Activated T-helper 1 cell treated with anti-CD3 and anti-CD28 coated beads, Interleukin-12 subunit alpha, Interleukin-12 subunit beta, Interleukin-2, Interleukin-4 antibody, amounts not matched to agents 30 ng/mL and 10 ng/mL and 1 ng/mL, durations not matched to agents 14 hours and 24 hours and 36 hours (primary cell): ENCODE measurements at regions of chr6 and their contacts with region 1.

Region 1: GRCh38 chr6:36615018-36615761 is 21.0 kb downstream of the SRSF3 start:
- DNase-seq: peak; percentile 37
- H3K4me3 Mint-ChIP-seq: no peak overlapping the region
- H3K27ac Mint-ChIP-seq: no peak overlapping the region
- H3K4me1 Mint-ChIP-seq: peaks cover 12% of the 10 kb centered on the region
- H3K27me3 Mint-ChIP-seq: no peaks in the 10 kb centered on the region

Region 2: GRCh38 chr6:36599791-36600209 is 15.4 kb before region 1 on chr6:
- intact Hi-C with region 1: loop called (anchors 2 kb)
- DNase-seq: peak; percentile 40
- H3K4me3 Mint-ChIP-seq: peak overlapping the region; percentile 97
- H3K27ac Mint-ChIP-seq: peak overlapping the region; percentile 81
- H3K4me1 Mint-ChIP-seq: peaks cover 80% of the 10 kb centered on the region
- H3K27me3 Mint-ChIP-seq: no peaks in the 10 kb centered on the region

Region 3: DNA sequence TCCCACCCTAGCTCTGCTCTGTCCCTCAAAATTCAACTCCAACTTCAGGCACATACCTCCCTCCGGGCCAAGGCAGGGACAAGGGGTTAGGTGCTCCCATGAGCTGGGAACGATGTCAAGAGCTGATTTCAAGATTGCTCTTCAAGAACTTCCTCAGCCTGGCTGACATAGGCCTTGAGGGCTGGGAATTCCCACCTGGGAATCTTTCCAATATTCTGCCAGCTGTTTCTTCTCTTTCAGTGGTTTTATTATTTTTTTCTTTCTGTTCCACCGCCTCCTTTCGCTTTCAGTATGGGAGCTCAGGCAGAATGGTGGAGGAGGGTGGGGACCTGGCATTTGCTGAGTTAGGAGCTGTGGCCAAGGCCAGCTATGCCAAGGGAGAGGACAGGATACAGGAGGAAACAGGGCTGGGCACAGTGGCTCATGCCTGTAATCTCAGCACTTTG is 12.6 kb after region 1 on chr6:
- intact Hi-C with region 1: no loop called
- DNase-seq: no peak
- H3K4me3 Mint-ChIP-seq: no peak overlapping the region
- H3K27ac Mint-ChIP-seq: peak overlapping the region; percentile 51
- H3K4me1 Mint-ChIP-seq: peaks cover 38% of the 10 kb centered on the region
- H3K27me3 Mint-ChIP-seq: no peaks in the 10 kb centered on the region

Region 4: GRCh38 chr6:36724514-36725390 is 109.6 kb after region 1 on chr6:
- intact Hi-C with region 1: loop called (anchors 1 kb)
- DNase-seq: peak; percentile 13
- H3K4me3 Mint-ChIP-seq: no peak overlapping the region
- H3K27ac Mint-ChIP-seq: no peak overlapping the region
- H3K4me1 Mint-ChIP-seq: peaks cover 47% of the 10 kb centered on the region
- H3K27me3 Mint-ChIP-seq: no peaks in the 10 kb centered on the region

Region 5: GRCh38 chr6:36780442-36781177 is 165.4 kb after region 1 on chr6:
- intact Hi-C with region 1: loop called (anchors 1 kb)
- DNase-seq: no peak
- H3K4me3 Mint-ChIP-seq: no peak overlapping the region
- H3K27ac Mint-ChIP-seq: no peak overlapping the region
- H3K4me1 Mint-ChIP-seq: peaks cover 6% of the 10 kb centered on the region
- H3K27me3 Mint-ChIP-seq: peaks cover 4% of the 10 kb centered on the region

Region 6: GRCh38 chr6:36851149-36851614 is 236.0 kb after region 1 on chr6:
- intact Hi-C with region 1: loop called (anchors 5 kb)
- DNase-seq: peak; percentile 26
- H3K4me3 Mint-ChIP-seq: no peak overlapping the region
- H3K27ac Mint-ChIP-seq: no peak overlapping the region
- H3K4me1 Mint-ChIP-seq: peaks cover 12% of the 10 kb centered on the region
- H3K27me3 Mint-ChIP-seq: no peaks in the 10 kb centered on the region